Activated CD8-positive, alpha-beta T cell treated with anti-CD3 and anti-CD28 coated beads for 36 hours (primary cell): ENCODE measurements at regions of chr7 and their contacts with region 1.

Region 1: DNA sequence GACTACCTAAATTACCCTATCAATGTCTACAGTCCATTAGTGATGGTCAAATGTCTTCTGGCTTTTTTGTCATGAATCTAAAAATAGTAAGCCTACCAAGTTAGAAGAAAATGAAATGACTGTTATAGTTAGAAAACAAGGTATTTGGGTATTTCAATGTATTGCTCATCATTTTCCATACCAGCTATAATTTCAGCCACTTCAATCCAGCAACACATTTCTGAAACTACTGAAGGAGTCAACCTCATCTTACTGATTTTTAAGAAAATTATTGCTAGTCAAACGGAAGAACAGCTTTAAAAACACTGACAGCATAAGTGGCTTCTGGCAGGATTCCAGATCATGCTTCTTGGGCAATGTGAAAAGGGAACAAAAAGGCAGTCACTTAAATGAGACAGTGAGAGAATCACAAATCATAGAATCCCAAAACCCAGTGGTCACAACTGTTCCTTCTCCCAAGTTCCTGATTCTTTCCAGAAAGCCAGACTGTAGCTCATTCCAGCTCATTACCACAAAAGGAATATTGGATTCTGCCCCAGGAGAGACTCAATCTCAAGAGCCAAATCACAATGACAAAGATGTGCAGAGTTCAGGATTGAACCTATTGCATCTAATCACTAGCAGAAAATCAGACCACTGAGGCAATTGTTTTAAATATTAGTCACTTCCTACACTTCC is 61.2 kb upstream of the LRRN3 start:
- DNase-seq: peak; percentile 78
- ATAC-seq: peak; percentile 59
- H3K4me3 Mint-ChIP-seq: peak overlapping the region; percentile 44
- H3K27ac Mint-ChIP-seq: peak overlapping the region; percentile 95
- H3K4me1 Mint-ChIP-seq: peaks cover 64% of the 10 kb centered on the region
- H3K27me3 Mint-ChIP-seq: no peaks in the 10 kb centered on the region
- CTCF ChIP-seq: no peak

Region 2: DNA sequence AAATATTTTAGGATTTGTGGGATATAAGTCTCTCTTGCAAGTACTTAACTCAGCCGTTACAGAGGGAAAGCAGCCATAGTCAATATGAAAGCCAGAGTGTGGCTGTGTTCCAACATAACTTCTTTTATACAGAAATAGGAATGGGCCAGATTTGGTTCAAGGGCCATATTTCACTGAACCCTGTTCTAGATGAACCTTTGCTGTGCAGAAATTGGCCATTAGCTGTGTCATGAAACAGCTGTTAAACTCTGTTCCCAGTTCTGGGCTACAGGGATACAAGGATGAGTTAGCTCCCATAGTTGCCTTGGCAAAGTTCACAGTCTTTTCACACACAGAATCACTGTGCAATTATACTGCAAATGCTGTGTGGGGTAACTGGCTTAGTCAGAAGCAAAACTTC is 152.7 kb before region 1 on chr7:
- CTCF ChIA-PET with region 1: no interaction called
- POLR2A ChIA-PET with region 1: no interaction called
- intact Hi-C with region 1: no loop called
- DNase-seq: no peak
- ATAC-seq: no peak
- H3K4me3 Mint-ChIP-seq: no peak overlapping the region
- H3K27ac Mint-ChIP-seq: no peak overlapping the region
- H3K4me1 Mint-ChIP-seq: no peaks in the 10 kb centered on the region
- H3K27me3 Mint-ChIP-seq: no peaks in the 10 kb centered on the region
- CTCF ChIP-seq: no peak

Region 3: GRCh38 chr7:111018960-111019736 is 10.6 kb before region 1 on chr7:
- CTCF ChIA-PET with region 1: interaction called, 10 read pairs
- POLR2A ChIA-PET with region 1: interaction called, 13 read pairs
- intact Hi-C with region 1: no loop called
- DNase-seq: peak; percentile 37
- ATAC-seq: peak; percentile 68
- H3K4me3 Mint-ChIP-seq: peak overlapping the region; percentile 40
- H3K27ac Mint-ChIP-seq: peak overlapping the region; percentile 89
- H3K4me1 Mint-ChIP-seq: peaks cover 78% of the 10 kb centered on the region
- H3K27me3 Mint-ChIP-seq: no peaks in the 10 kb centered on the region
- CTCF ChIP-seq: no peak

Region 4: GRCh38 chr7:111083413-111083812 is 53.7 kb after region 1 on chr7:
- CTCF ChIA-PET with region 1: interaction called, 8 read pairs
- POLR2A ChIA-PET with region 1: interaction called, 12 read pairs
- intact Hi-C with region 1: loop called (anchors 2 kb)
- DNase-seq: peak; percentile 73
- ATAC-seq: peak; percentile 77
- H3K4me3 Mint-ChIP-seq: peak overlapping the region; percentile 62
- H3K27ac Mint-ChIP-seq: peak overlapping the region; percentile 97
- H3K4me1 Mint-ChIP-seq: peaks cover 77% of the 10 kb centered on the region
- H3K27me3 Mint-ChIP-seq: no peaks in the 10 kb centered on the region
- CTCF ChIP-seq: no peak